Calu3 (cell line): ENCODE measurements at regions of chr6 and their contacts with region 1.

Region 1: DNA sequence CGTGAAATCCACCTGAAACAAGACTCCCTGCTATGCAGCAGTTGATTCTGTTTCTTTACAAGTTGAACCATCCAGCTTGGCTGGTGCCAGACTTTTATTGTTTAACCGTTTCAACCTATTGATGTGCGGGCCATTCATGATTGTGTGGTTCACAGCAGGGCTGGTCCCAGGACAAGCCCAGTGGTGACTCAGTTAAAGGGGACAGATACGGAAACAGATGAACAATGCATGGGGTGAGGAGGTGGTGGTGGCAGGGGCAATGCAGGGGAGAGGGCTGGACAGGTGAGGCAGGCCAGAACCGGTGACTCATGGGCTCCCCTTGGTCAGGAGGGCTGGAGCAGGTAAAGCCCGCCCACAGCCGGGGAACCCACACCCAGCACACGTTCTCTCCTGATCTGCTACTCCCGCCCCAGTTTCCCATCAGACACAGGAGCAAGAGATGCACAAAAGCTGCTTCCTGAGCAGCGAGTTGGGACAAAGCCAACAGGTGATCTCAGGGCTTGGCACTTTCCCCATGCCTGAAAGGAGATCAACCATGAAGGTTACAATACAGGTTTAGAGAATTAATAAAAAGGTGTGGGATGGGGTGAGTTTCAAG is 232.2 kb downstream of the LY86 start:
- DNase-seq: peak; percentile 93
- H3K4me3 Mint-ChIP-seq: peak overlapping the region; percentile 43
- H3K27ac Mint-ChIP-seq: no peak overlapping the region
- H3K4me1 Mint-ChIP-seq: no peaks in the 10 kb centered on the region
- H3K27me3 Mint-ChIP-seq: no peaks in the 10 kb centered on the region
- CTCF ChIP-seq: no peak

Region 2: GRCh38 chr6:6875814-6876470 is 55.2 kb after region 1 on chr6:
- CTCF ChIA-PET with region 1: no interaction called
- intact Hi-C with region 1: loop called (anchors 5 kb)
- DNase-seq: peak; percentile 7
- H3K4me3 Mint-ChIP-seq: no peak overlapping the region
- H3K27ac Mint-ChIP-seq: peak overlapping the region; percentile 44
- H3K4me1 Mint-ChIP-seq: peaks cover 11% of the 10 kb centered on the region
- H3K27me3 Mint-ChIP-seq: no peaks in the 10 kb centered on the region
- CTCF ChIP-seq: no peak